Posterior vena cava (tissue), 2 donors: ENCODE measurements at regions of chr17 and their contacts with region 1.

Region 1: GRCh38 chr17:61412143-61412859 is 12.7 kb downstream of the TBX2 start:
- DNase-seq: peak; percentile 94

Region 2: GRCh38 chr17:60431501-60431900 is 980.8 kb before region 1 on chr17:
- intact Hi-C with region 1: no loop called
- DNase-seq: no peak

Region 3: DNA sequence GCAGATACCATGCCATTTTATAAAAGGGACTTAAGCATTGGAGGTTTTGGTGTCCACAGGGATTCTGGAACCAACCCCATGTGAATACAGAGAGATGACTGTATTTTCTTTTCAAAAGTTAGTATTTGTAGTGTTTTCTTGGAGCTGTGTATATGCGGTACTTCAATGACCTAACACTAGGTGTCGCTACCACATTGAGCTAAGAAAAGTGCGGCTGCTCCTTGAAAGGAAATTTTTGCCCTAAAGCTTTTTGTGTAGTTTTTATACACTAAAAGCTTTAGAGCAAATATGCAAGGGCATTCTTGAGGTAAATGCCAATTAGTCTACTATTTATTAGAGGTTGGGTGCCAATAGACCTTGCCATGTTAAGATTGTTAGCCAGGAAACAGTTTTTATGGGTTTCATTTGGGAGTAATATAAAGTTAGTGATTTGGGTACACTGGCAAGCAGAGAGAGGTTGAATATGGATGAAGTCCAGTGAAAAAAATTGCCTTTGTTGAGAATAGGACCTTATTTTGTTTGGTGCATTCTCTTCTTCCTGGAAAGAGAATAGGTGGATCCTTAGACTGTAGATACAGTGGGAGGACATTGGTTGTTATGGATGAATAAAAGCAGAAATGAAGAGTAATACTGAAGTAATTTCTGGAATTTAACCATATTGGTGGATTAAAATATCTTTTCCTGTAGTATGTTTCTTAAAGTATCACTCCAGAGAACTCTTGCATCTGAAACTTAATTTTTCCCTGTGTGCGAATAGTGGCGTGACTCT is 691.4 kb before region 1 on chr17:
- intact Hi-C with region 1: loop called in 1 of 2 experiments (anchors 2 kb)
- DNase-seq: no peak

Region 4: DNA sequence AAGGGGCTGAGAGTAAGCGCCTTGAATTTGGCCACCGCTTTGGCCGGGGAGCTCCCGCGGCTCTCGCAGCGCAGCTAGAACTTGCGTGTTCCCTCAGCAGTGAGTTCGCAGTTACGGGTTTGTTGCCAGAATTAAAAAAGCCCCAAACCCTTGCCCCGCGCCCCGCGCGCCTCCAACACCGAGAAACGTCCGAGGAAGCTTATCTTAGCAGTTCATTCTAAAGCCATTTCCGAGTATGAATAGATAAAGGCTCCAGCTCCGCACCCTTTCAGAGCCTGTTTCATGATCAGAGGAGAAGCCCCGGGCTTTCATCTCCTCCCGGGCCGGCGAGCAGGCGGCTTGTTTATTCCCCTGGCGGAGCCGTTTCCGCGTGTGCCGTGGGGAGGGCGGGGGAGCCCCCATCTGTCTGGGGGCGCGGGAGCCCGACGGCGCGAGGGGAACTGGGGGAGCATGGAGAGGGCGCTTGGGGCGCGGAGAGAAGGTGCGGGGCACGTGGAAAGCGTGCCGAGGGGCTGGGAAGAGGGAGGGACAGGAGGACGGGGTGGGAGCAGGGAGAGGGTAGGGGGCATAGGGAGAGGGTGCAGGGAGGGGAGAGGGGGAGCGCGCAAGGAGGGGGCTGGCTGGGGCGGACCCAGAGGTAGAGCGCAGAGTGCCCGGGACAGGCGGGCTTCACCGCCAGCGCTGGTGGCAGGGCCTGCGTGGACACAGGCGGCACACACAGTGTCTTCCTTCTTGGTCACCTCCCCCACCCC is 49.8 kb after region 1 on chr17:
- intact Hi-C with region 1: loop called in 1 of 2 experiments (anchors 1 kb)
- DNase-seq: no peak

Region 5: DNA sequence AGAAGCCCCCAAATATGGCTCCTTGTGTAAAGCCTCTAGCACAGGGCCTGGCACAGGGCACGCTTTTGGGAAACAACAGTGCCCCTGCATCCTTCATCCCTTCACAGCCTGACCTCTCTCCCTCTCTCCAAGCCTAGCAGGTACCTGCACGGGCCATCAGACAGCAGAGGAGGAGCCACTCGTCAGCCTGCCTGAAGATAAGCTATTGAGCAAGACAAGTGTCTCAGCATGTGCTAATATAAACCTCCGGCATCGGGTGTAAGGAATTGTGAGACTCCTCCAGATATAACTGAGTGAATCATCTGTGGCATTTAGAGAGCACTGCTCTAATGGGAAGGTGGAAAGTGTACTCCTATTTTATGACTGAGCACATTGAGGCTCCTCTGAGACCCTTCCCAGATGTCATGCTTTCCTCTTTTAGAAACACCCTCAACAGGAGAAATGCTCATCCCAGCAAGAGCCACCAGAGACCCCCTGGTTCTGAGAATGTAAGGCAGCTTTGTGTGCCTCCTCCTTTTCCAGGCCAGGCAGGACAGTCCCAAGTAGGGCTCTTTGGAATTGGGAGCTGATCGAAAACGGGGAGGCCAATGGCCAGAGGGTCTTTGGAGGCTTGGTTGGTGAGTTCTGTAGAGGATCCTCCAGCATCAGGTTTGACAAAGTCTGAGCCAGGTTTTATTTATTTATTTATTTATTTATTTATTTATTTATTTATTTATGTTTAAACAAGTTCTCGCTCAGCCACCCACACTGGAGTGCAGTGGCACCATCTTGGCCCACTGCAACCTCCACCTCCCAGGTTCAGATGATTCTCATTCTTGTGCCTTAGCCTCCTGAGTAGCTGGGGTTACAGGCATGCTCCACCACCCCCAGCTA is 78.5 kb after region 1 on chr17:
- intact Hi-C with region 1: loop called in 1 of 2 experiments (anchors 2 kb)
- DNase-seq: peak; percentile 58

Region 6: DNA sequence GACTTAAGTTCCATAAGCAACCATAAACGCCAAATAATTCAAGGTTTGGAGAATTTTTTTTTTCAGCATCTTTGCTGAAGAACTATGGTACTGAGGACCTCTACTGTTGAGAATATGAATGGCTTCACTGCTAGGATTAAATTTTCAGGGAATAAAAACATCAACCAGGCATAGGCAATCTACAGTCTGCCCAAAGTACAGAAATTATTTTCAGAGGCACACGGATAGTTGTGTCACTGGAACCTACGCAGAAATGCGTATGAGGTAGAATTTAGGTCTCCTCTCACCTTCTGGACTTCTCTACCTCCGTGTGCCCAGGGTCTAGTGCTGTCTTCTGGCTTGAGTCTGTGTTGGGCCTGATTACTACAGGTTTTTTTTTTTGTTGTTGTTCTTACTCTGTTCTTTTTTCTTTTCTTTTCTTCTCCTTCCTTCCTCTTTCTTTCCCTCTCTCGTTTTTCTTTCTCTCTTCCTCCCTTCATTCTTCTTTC is 139.0 kb after region 1 on chr17:
- intact Hi-C with region 1: loop called (anchors 5 kb)
- DNase-seq: no peak